Activated B cell treated with CpG ODN at 0.5 μM for 24 hours (primary cell): ENCODE measurements at regions of chrX and their contacts with region 1.

Region 1: DNA sequence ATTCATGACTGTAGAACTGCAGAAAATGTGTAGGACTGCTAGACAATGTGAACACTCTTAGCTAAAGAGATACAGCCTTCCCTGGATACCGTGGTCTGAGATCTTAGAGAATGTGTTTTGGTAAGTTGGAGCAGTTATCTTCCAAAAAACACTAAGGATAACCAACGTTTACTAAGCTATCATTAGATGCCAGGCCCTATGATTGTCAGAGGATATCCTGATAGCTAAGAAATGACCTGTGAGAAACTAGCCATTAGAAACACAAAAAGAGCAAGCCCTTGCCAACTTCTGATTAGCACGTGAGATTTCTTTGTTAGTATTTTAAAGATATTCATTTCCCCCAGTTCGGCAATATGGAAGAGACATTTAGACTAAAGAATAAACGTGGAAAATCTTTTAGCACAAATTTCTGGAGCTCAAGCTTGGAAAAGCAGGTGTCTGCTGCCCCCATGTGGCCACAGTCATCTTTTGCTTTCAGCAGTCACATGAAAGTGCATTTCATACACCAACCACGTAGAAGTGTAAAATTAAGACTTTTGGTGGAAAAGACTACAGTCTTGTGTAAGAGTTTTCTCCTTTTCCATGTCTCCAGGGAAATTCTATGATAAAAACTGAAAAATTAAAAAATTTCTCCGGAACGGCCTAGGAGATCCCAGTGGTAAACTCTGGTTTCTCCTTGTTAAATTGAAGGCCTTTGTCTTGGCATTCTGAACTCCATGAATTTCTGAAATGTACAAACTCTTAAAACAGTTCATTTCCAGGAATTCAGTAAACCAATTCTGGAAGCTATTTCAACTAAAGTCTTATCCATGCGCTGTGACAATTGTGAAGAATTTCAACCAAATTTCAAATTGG is 136.4 kb downstream of the ZNF674 start:
- DNase-seq: peak; percentile 32
- ATAC-seq: no peak
- H3K4me3 Mint-ChIP-seq: no peak overlapping the region
- H3K27ac Mint-ChIP-seq: no peak overlapping the region
- H3K4me1 Mint-ChIP-seq: no peaks in the 10 kb centered on the region
- H3K27me3 Mint-ChIP-seq: no peaks in the 10 kb centered on the region
- CTCF ChIP-seq: no peak

Region 2: DNA sequence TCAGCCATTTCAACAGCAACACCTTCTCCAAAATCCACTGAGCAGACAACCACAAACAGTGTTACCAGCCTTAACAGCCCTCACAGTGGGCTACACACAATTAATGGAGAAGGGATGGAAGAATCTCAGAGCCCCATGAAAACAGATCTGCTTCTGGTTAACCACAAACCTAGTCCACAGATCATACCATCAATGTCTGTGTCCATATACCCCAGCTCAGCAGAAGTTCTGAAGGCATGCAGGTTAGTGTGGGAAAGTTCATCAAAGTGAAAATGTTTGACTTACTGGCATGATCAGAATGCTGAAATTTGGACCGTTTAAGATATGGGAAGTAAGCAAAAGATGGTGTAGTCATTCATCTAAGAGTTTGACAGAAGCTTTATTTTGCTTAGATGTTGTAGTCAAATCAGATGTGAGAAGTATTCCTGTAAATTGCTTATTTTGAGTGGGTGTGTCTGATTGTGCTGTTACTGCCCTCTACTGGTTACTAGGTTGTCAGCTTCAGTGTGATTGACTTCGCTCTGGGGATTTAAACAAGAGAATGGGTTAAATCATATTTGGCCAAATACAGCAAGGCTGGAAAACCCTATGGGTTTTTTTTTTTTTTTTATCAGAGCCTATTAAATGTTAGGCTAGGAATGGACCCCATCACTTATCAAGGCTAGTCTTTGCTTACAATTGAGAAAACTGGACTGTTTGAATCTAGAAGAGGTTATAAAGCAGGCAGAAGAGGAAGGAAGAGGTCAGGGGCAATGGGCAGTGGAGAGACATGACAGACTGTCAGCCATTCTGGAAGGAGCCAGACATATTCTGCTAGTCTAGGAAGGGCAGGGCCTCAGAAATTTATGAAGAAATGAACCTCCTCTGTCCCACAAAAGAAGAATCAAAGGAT is 1338.4 kb before region 1 on chrX:
- CTCF ChIA-PET with region 1: no interaction called
- POLR2A ChIA-PET with region 1: no interaction called
- intact Hi-C with region 1: loop called (anchors 10 kb)
- DNase-seq: no peak
- ATAC-seq: peak; percentile 40
- H3K4me3 Mint-ChIP-seq: no peak overlapping the region
- H3K27ac Mint-ChIP-seq: peak overlapping the region; percentile 37
- H3K4me1 Mint-ChIP-seq: peaks cover 38% of the 10 kb centered on the region
- H3K27me3 Mint-ChIP-seq: no peaks in the 10 kb centered on the region
- CTCF ChIP-seq: no peak

Region 3: DNA sequence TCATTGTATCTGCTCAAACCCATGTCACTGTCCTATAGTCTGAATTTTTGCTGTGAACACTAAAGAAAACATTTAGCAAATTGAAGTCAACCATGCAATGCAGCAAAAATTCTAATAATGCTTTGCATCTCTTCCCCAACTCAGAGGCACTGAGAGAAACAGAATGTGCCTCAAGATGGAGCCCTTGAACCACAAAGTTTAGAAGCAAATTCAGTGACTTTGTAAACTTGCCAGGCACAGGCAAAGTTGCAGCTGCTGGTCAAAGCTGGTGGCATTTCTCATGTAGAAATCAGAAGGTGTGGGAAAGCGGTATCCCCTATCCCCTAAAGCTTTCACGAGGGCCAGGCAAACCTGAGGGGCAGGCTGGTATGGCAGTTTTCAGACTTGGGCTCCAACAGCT is 1086.4 kb before region 1 on chrX:
- CTCF ChIA-PET with region 1: interaction called, 3 read pairs
- POLR2A ChIA-PET with region 1: no interaction called
- intact Hi-C with region 1: loop called (anchors 2 kb)
- DNase-seq: no peak
- ATAC-seq: no peak
- H3K4me3 Mint-ChIP-seq: no peak overlapping the region
- H3K27ac Mint-ChIP-seq: no peak overlapping the region
- H3K4me1 Mint-ChIP-seq: no peaks in the 10 kb centered on the region
- H3K27me3 Mint-ChIP-seq: no peaks in the 10 kb centered on the region
- CTCF ChIP-seq: no peak